Endothelial cell of umbilical vein (primary cell): ENCODE measurements at regions of chr1 and their contacts with region 1.

Region 1: DNA sequence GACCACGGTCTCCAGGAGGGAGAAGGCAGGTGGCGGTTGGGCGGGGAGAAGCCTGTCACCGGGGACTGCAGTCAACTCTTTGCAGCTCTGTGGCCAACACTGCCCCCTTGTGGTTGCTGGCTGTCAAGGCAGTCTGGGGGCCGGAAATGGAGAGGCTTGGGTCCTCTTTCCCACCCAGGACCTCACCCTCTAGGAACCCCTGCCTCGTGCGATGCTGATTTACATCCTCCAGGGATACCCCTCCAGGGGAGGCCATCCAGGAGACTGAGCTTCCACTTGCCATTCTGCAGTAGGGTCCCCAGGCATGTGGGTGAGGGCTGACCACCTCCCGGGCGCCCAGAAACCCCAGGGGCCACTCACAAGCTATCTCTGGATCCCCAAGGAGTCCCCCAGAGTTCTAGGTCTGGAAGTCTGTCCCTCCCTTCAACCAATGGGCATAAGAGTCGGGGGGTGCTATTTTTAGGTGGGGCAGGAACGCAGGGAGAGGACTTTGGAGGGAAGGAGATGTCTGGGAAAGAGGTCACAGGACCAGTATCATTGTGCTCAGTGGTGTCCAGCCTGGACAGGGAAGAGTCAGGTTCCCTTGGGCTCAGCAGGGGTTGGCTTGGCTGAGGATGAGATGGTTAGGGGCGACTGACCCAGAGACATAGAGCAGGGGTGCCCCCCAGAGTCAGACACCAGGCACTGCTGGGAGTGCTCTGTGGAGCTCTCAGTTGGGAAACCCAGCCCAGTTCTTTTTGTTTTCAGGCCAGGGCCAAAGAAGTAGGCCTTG is 7.1 kb upstream of the GPR61 start:
- DNase-seq: peak; percentile 67
- H3K4me3 ChIP-seq: no peak overlapping the region
- H3K27ac ChIP-seq: no peak overlapping the region
- H3K4me1 ChIP-seq: peaks cover 4% of the 10 kb centered on the region
- H3K27me3 ChIP-seq: peaks cover under 1 to 4% of the 10 kb centered on the region in 2 experiments
- CTCF ChIP-seq: peak; percentile 86 to 97
- POLR2A ChIP-seq: no peak

Region 2: GRCh38 chr1:109239580-109240095 is 292.9 kb before region 1 on chr1:
- CTCF ChIA-PET with region 1: interaction called, 16 read pairs
- POLR2A ChIA-PET with region 1: no interaction called
- dilution Hi-C with region 1: no loop called
- intact Hi-C with region 1: no loop called
- DNase-seq: peak; percentile 18
- H3K4me3 ChIP-seq: no peak overlapping the region
- H3K27ac ChIP-seq: no peak overlapping the region
- H3K4me1 ChIP-seq: no peaks in the 10 kb centered on the region
- H3K27me3 ChIP-seq: peaks cover 12 to 17% of the 10 kb centered on the region in 2 experiments
- CTCF ChIP-seq: peak; percentile 44 to 47
- POLR2A ChIP-seq: no peak

Region 3: DNA sequence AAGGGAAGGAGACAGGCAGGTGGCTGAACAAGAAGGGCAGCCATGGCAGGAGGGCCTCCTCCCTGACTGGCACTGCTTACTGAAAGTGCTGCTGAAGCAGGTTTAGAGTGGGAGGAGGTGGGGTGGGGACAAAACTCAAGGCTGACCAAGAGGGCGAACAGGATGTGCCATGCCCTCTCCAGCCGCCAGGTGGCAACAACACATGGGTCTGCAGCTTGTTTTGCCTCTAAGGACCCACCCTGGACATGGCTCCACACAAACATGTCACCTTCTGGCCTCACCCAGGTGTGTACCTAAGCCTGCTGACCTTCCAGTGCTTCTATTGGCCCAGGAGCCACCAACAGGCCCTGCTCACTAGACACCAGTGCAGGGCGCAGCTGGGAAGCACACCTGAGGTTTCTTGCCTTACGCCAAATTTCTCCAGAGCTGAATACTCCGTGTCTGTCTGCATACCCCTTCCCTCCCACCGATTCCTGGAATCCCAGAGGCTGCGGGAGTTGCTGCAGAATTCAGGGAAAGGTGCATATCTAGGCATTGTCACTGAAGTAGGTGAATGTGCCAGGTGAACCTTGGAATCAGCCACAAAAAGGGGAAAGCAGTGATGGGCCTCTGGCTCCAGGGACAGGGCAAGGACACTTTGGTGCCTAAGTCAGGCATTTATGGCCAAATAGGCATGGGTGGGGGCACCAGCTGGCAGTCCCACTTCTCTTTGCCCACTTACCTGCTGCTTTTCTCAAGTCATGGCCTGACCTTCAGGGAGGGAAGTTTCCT is 254.9 kb before region 1 on chr1:
- CTCF ChIA-PET with region 1: interaction called, 55 read pairs
- POLR2A ChIA-PET with region 1: no interaction called
- dilution Hi-C with region 1: no loop called
- intact Hi-C with region 1: no loop called
- DNase-seq: peak; percentile 69
- H3K4me3 ChIP-seq: no peak overlapping the region
- H3K27ac ChIP-seq: no peak overlapping the region
- H3K4me1 ChIP-seq: peaks cover 12% of the 10 kb centered on the region
- H3K27me3 ChIP-seq: no peaks in the 10 kb centered on the region
- CTCF ChIP-seq: peak; percentile 78 to 95
- POLR2A ChIP-seq: no peak

Region 4: DNA sequence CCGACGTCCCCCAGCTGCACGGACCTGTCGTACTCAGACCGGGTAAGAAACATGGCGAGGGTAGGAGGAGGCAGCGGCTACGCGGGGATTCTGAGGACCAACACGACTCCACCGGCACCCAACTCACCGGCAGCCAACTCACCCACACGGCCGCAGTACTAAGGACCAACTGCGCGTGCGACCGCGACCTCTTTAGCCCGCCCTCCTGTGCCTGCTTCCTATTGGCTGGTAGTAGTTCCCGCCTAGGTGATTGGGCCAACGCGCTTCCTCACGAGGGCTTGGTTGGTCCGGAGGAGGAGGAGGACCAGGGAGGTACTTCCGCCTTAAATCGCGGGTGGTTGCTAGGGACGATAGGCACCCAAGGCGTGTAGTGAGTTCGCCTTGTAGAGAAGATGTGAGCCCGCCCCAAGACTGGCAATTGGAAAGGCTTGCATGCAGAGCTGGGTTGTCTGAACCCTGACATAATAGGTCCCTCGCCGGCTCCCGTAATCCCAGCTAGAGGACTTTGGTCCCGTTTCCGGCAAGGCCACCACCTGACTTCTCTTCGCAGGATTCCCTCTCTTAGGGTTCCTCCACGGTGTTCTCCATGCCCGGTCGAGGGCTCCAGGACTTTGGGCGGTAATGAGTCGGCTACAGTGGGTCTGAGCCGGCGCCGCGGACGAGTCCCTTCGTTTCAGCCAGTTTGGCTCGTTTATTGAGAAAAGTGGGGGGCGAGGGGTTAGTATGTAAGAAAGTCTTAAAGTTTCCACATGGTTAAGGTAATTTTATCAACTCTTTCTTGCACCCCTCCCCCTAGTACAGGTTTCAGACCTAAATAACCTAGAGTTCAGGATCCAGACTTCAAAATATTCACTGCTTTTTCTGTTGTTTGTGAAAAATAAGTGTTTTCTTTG is 106.0 kb before region 1 on chr1 and contains the start of gene PSMA5:
- CTCF ChIA-PET with region 1: interaction called, 29 read pairs
- POLR2A ChIA-PET with region 1: interaction called, 3 read pairs
- dilution Hi-C with region 1: no loop called
- intact Hi-C with region 1: no loop called
- DNase-seq: peak; percentile 99
- H3K4me3 ChIP-seq: peak within 1 kb of the TSS; percentile 63 to 89 (median 86)
- H3K27ac ChIP-seq: peak within 1 kb of the TSS; percentile 68
- H3K4me1 ChIP-seq: peaks cover 15% of the 10 kb centered on the region
- H3K27me3 ChIP-seq: no peaks in the 10 kb centered on the region
- CTCF ChIP-seq: no peak
- POLR2A ChIP-seq: peak; percentile 88
- total RNA-seq, gene PSMA5: 112 and 125 TPM in 2 replicates

Region 5: GRCh38 chr1:109493805-109494539 is 38.6 kb before region 1 on chr1 and contains the start of gene CYB561D1:
- CTCF ChIA-PET with region 1: interaction called, 955 read pairs
- POLR2A ChIA-PET with region 1: interaction called, 4 read pairs
- dilution Hi-C with region 1: no loop called
- intact Hi-C with region 1: loop called (anchors 1 kb)
- DNase-seq: peak; percentile 91
- H3K4me3 ChIP-seq: peak within 1 kb of the TSS; percentile 79 to 94 (median 80)
- H3K27ac ChIP-seq: peak within 1 kb of the TSS; percentile 42
- H3K4me1 ChIP-seq: peaks cover 18% of the 10 kb centered on the region
- H3K27me3 ChIP-seq: no peaks in the 10 kb centered on the region
- CTCF ChIP-seq: peak; percentile 98 to 99
- POLR2A ChIP-seq: peak; percentile 76
- total RNA-seq, gene CYB561D1: 6.9 and 7.3 TPM in 2 replicates

Region 6: GRCh38 chr1:109516872-109517271 is 15.7 kb before region 1 on chr1:
- CTCF ChIA-PET with region 1: interaction called, 22 read pairs
- POLR2A ChIA-PET with region 1: no interaction called
- dilution Hi-C with region 1: no loop called
- intact Hi-C with region 1: no loop called
- DNase-seq: no peak
- H3K4me3 ChIP-seq: no peak overlapping the region
- H3K27ac ChIP-seq: no peak overlapping the region
- H3K4me1 ChIP-seq: no peaks in the 10 kb centered on the region
- H3K27me3 ChIP-seq: peaks cover 5 to 16% of the 10 kb centered on the region in 2 experiments
- CTCF ChIP-seq: no peak
- POLR2A ChIP-seq: no peak

Region 7: DNA sequence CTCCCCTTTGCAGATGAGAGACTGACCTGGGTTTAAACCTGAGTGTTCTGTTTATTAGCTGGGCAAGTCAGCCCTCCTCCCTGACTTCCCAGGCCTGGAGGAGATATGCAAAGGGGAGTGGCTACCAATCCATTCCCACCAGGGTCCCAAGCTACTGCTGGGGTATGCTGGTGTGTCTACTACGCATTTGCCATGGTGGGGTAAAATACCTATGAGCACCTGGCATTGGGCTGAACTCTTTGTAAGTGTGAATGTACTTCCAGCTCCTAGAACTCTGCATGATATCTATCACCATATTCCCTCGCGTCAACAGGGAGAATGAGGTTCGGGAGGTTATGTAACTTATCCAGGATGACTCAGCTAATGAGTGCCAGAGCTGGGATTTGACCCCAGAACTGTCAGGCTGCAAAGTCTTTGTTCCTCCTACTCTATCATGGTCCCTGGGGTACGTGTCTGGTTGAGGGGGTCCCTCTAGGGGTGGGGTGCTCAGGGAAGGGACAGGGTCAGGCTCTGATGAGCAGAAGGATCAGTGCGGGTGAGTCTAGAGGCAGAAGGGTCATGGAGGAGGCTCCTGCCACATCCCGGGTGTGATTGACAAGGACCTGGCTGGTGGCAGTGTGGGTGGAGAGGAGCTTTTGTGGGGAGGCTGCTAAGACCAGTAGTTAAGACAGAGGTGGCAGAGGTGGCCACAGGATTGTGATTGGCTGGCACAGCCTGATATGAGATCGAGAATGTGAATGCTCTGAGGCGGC is 103.8 kb after region 1 on chr1:
- CTCF ChIA-PET with region 1: interaction called, 42 read pairs
- POLR2A ChIA-PET with region 1: no interaction called
- dilution Hi-C with region 1: no loop called
- intact Hi-C with region 1: no loop called
- DNase-seq: no peak
- H3K4me3 ChIP-seq: no peak overlapping the region
- H3K27ac ChIP-seq: no peak overlapping the region
- H3K4me1 ChIP-seq: no peaks in the 10 kb centered on the region
- H3K27me3 ChIP-seq: no peaks in the 10 kb centered on the region
- CTCF ChIP-seq: no peak
- POLR2A ChIP-seq: no peak